ENCODE measurements at regions of chr6 and their contacts with region 1.

Region 1: DNA sequence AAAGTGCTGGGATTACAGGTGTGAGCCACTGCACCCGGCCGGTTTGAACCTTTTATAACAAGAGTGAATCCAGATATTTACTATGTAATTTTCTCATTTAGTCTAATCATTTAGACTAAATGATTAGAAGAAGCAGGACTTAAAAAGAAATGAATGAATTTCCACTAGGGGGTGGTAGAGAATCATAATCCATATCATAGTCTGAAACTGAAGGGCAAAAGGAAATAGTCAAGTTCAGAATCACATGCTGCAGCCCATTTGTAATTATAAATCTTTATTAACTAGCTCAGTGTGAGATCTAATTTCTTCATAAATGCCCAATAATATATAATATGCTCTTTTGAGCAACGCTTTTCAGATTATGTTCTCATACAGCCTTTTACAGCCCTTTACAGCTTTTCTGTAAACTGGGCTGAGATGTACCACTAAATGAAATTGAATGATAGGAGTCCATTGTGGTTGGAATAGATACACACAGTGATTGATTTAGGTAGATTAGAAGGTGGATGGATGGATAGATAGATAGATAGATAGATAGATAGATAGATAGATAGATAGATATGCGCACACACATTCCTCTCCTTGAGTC is 31.8 kb downstream of the PSMB9 start:
- DNase-seq: peak; percentile 72
- ATAC-seq: peak; percentile 80
- H3K4me3 ChIP-seq: no peak overlapping the region
- H3K27ac ChIP-seq: no peak overlapping the region
- H3K4me1 ChIP-seq: peaks cover 0 to 7% of the 10 kb centered on the region in 2 experiments; a peak in 2 of 4 replicates
- H3K27me3 ChIP-seq: no peaks in the 10 kb centered on the region
- CTCF ChIP-seq: peak; percentile 33 to 80 (median 64)
- POLR2A ChIP-seq: no peak
- RAD21 ChIP-seq: peak; percentile 86

Region 2: GRCh38 chr6:32947552-32948465 is 62.0 kb after region 1 on chr6:
- CTCF ChIA-PET with region 1: interaction called, 13 read pairs
- POLR2A ChIA-PET with region 1: no interaction called
- RAD21 ChIA-PET with region 1: interaction called in 1 of 2 experiments, 4 read pairs
- intact Hi-C with region 1: loop called (anchors 1 kb)
- DNase-seq: peak; percentile 48
- ATAC-seq: peak; percentile 94
- H3K4me3 ChIP-seq: no peak overlapping the region
- H3K27ac ChIP-seq: no peak overlapping the region
- H3K4me1 ChIP-seq: peaks cover 0 to 4% of the 10 kb centered on the region in 2 experiments; a peak in 2 of 4 replicates
- H3K27me3 ChIP-seq: no peaks in the 10 kb centered on the region
- CTCF ChIP-seq: peak; percentile 64 to 78 (median 70)
- POLR2A ChIP-seq: no peak
- RAD21 ChIP-seq: peak; percentile 89

Region 3: DNA sequence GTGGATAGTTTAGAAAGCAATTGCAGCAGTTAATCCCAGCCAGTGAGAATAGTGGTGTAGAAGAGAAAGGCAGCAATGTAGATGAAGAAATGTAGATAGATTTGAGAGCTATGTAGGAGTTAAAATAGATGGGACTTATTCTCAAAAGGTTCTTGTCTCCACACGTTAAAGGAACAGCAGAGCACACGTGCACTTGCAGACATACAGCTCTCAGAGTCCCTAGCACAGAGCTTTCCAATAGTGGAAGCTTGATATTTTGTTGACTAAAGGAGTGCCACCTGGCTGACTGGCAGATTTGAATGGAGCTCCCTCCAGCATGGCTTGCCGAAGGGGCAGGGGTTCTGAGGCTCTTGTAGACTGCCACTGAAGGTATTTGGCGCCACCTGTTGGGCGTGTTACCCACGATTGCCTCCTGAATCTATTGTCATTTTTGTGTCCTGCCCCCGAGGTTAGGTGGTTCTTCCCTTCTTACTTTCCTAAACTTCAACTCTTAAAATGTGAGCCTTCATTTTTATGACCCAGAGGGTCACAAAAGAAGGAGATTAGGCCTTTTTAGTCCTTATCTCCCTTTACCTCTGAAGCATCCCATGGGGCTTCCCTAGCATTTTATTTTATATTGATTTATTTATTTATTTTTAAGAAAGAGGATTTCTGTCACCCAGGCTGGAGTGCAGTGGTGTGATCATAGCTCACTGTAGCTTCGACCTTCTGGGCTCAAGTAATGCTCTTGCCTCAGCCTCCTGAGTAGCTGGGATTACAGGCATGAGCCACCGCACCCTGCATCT is 99.0 kb after region 1 on chr6:
- CTCF ChIA-PET with region 1: interaction called, 39 read pairs
- POLR2A ChIA-PET with region 1: interaction called, 6 read pairs
- RAD21 ChIA-PET with region 1: interaction called in 1 of 2 experiments, 8 read pairs
- intact Hi-C with region 1: loop called (anchors 1 kb)
- DNase-seq: peak; percentile 77
- ATAC-seq: peak; percentile 81
- H3K4me3 ChIP-seq: no peak overlapping the region
- H3K27ac ChIP-seq: no peak overlapping the region
- H3K4me1 ChIP-seq: no peaks in the 10 kb centered on the region
- H3K27me3 ChIP-seq: no peaks in the 10 kb centered on the region
- CTCF ChIP-seq: peak; percentile 84 to 95 (median 90)
- POLR2A ChIP-seq: no peak
- RAD21 ChIP-seq: peak; percentile 98